Activated CD8-positive, alpha-beta T cell treated with anti-CD3 and anti-CD28 coated beads for 36 hours (primary cell): ENCODE measurements at regions of chr5 and their contacts with region 1.

Region 1: DNA sequence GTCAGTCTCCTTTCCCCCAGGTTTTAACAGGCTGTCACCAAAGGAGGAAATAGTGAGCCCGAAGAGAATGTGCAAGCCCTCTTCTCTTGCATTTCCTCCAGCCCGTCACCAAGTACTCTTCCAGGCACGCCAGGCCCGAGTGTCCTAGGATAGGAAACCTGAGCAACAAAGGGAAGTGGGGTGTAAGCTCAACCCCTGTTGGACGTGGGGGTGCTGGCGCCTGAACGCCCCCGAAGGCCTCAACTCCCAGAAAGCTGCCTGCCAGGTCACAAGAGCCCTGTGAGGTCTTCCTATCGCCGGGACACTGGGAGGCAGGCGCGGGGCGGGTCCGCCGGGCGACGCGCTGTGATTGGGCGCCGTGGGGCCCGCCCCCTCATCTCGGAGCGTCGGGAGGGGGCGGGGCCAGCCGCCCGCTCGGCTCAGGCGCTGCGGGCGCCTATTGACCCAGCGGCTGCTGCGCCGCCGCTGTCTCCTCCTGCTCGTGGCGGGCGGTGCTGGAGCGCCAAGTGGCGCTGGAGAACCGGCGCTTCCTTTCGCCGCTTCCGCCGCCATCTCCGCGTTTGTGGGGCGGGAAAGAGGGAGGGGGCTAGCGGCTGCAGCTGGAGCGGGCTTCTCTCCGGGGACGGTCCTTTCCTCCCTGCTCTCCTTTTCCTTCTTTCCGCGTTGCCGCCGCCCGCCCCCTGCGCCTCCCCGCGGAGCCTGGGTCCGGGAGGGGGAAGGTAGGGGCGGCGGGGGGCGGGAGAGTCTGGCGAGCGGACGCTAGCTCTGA is 572 bp upstream of the MAN2A1 start:
- DNase-seq: peak; percentile 76
- ATAC-seq: peak; percentile 83
- H3K4me3 Mint-ChIP-seq: peak overlapping the region; percentile 91
- H3K27ac Mint-ChIP-seq: peak overlapping the region; percentile 96
- H3K4me1 Mint-ChIP-seq: peaks cover 37% of the 10 kb centered on the region
- H3K27me3 Mint-ChIP-seq: peaks cover 3% of the 10 kb centered on the region
- CTCF ChIP-seq: no peak

Region 2: DNA sequence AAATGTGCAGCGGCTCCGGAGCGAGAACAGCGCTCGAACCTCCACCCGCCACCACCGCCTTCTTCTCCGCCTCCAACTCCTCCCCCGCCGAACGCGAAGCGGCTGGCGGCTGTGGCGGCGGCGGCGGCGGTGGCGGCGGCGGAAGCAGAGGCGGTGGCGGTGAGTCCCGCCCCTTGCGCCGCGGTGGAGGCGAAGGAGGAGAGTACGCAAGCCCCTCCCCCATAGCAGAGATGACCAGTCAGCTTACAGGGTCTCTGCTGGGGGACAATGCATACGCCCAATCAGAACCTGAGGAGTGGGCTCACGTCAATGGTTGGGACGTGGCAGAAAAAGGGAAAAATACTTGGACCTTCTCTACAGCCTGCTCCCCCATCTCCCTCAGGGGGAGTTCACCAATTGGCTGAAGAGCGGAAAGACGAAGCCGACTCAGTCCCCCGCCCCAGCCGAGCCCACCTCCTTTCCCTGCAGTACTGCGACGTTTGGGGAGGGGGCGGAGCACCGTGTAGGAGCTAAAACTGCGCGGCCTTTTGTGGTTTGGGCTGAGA is 279.2 kb before region 1 on chr5 and contains the start of gene PJA2:
- CTCF ChIA-PET with region 1: no interaction called
- POLR2A ChIA-PET with region 1: interaction called, 3 read pairs
- intact Hi-C with region 1: loop called (anchors 10 kb)
- DNase-seq: peak; percentile 99
- ATAC-seq: peak; percentile 85
- H3K4me3 Mint-ChIP-seq: peak within 1 kb of the TSS; percentile 90
- H3K27ac Mint-ChIP-seq: peak within 1 kb of the TSS; percentile 99
- H3K4me1 Mint-ChIP-seq: peaks cover 46% of the 10 kb centered on the region
- H3K27me3 Mint-ChIP-seq: no peaks in the 10 kb centered on the region
- CTCF ChIP-seq: no peak
- total RNA-seq, gene PJA2: 65.2 to 67.4 TPM

Region 3: DNA sequence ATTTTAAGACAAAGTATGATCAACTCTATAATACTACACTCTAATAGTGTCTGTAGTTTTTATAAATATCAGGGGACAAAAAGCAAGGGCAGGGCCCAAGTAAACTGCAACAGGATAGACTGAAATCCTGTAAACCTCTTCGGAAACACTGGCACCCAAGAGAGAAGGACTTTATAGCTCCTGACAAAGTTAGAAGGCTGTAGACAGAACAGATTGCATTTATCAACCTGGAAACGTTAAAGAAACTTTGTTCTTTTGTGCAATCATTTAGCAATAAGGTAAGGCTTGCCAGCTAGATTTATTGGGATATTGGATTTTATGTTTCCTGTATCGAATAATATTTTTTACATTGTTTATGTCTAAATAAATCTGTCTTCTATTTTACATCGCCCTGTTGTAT is 91.3 kb before region 1 on chr5:
- CTCF ChIA-PET with region 1: no interaction called
- POLR2A ChIA-PET with region 1: no interaction called
- intact Hi-C with region 1: no loop called
- DNase-seq: no peak
- ATAC-seq: no peak
- H3K4me3 Mint-ChIP-seq: no peak overlapping the region
- H3K27ac Mint-ChIP-seq: no peak overlapping the region
- H3K4me1 Mint-ChIP-seq: peaks cover 10% of the 10 kb centered on the region
- H3K27me3 Mint-ChIP-seq: no peaks in the 10 kb centered on the region
- CTCF ChIP-seq: no peak

Region 4: GRCh38 chr5:109676920-109677319 is 12.2 kb before region 1 on chr5:
- CTCF ChIA-PET with region 1: interaction called, 14 read pairs
- POLR2A ChIA-PET with region 1: interaction called, 3 read pairs
- intact Hi-C with region 1: no loop called
- DNase-seq: no peak
- ATAC-seq: no peak
- H3K4me3 Mint-ChIP-seq: no peak overlapping the region
- H3K27ac Mint-ChIP-seq: no peak overlapping the region
- H3K4me1 Mint-ChIP-seq: no peaks in the 10 kb centered on the region
- H3K27me3 Mint-ChIP-seq: peaks cover 8% of the 10 kb centered on the region
- CTCF ChIP-seq: no peak

Region 5: GRCh38 chr5:109788596-109788995 is 99.4 kb after region 1 on chr5:
- CTCF ChIA-PET with region 1: interaction called, 5 read pairs
- POLR2A ChIA-PET with region 1: no interaction called
- intact Hi-C with region 1: loop called (anchors 5 kb)
- DNase-seq: no peak
- ATAC-seq: peak; percentile 55
- H3K4me3 Mint-ChIP-seq: no peak overlapping the region
- H3K27ac Mint-ChIP-seq: peak overlapping the region; percentile 39
- H3K4me1 Mint-ChIP-seq: peaks cover 23% of the 10 kb centered on the region
- H3K27me3 Mint-ChIP-seq: no peaks in the 10 kb centered on the region
- CTCF ChIP-seq: no peak

Region 6: DNA sequence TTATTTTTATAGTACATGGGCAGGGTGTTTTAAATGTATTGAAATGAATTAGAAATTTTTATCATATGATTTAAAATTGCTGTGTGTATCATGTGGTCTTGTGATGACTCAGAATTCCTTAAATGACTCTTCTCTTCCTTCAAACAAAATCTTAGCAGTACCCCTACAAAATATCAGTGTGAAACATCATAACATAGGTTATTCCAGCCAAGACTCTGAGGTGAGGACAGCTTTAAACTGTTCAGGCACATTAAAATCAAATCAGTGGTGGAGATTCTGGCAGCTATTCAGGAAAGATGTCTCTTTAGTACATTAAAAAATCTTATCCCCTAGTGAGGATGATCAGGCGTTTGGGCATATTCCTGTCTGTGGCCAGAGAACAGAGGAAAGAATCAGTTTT is 174.6 kb after region 1 on chr5:
- CTCF ChIA-PET with region 1: interaction called, 4 read pairs
- POLR2A ChIA-PET with region 1: no interaction called
- intact Hi-C with region 1: loop called (anchors 5 kb)
- DNase-seq: no peak
- ATAC-seq: peak; percentile 73
- H3K4me3 Mint-ChIP-seq: no peak overlapping the region
- H3K27ac Mint-ChIP-seq: no peak overlapping the region
- H3K4me1 Mint-ChIP-seq: peaks cover 70% of the 10 kb centered on the region
- H3K27me3 Mint-ChIP-seq: no peaks in the 10 kb centered on the region
- CTCF ChIP-seq: no peak

Region 7: GRCh38 chr5:110054240-110054639 is 365.1 kb after region 1 on chr5:
- CTCF ChIA-PET with region 1: interaction called, 5 read pairs
- POLR2A ChIA-PET with region 1: interaction called, 3 read pairs
- intact Hi-C with region 1: loop called (anchors 10 kb)
- DNase-seq: peak; percentile 89
- ATAC-seq: peak; percentile 92
- H3K4me3 Mint-ChIP-seq: no peak overlapping the region
- H3K27ac Mint-ChIP-seq: peak overlapping the region; percentile 66
- H3K4me1 Mint-ChIP-seq: peaks cover 42% of the 10 kb centered on the region
- H3K27me3 Mint-ChIP-seq: no peaks in the 10 kb centered on the region
- CTCF ChIP-seq: peak; percentile 64